IMR-90 (cell line): ENCODE measurements at regions of chr14 and their contacts with region 1.

Region 1: GRCh38 chr14:39154594-39155189 is 15.4 kb downstream of the TRAPPC6B start:
- DNase-seq: no peak
- ATAC-seq: no peak
- H3K4me3 ChIP-seq: no peak overlapping the region
- H3K27ac ChIP-seq: no peak overlapping the region
- H3K4me1 ChIP-seq: no peaks in the 10 kb centered on the region
- H3K27me3 ChIP-seq: no peaks in the 10 kb centered on the region
- CTCF ChIP-seq: no peak
- POLR2A ChIP-seq: no peak
- RAD21 ChIP-seq: no peak

Region 2: DNA sequence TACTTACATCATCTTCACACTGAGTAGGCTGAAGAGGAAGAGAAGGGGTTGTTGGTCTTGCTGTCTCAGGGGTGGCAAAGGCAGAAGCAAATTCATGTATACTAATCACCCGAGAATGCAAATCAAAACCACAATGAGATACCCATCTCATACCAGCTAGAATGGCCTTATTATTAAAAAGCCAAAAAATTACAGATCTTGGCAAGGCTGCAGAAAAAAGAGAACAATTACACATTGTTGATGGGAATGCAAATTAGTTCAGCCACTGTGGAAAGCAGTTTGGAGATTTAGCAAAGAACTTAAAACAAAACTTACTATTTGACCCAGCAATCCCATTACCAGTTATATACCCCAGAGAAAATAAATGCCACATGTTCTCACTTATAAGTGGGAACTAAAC is 206.5 kb before region 1 on chr14:
- CTCF ChIA-PET with region 1: no interaction called
- POLR2A ChIA-PET with region 1: no interaction called
- dilution Hi-C with region 1: no loop called
- in situ Hi-C with region 1: no loop called
- intact Hi-C with region 1: no loop called
- DNase-seq: no peak
- ATAC-seq: no peak
- H3K4me3 ChIP-seq: no peak overlapping the region
- H3K27ac ChIP-seq: no peak overlapping the region
- H3K4me1 ChIP-seq: no peaks in the 10 kb centered on the region
- H3K27me3 ChIP-seq: 0 out of 2 replicates have a peak, but pooled peaks cover 3% of the 10 kb centered on the region
- CTCF ChIP-seq: no peak
- POLR2A ChIP-seq: no peak
- RAD21 ChIP-seq: no peak

Region 3: DNA sequence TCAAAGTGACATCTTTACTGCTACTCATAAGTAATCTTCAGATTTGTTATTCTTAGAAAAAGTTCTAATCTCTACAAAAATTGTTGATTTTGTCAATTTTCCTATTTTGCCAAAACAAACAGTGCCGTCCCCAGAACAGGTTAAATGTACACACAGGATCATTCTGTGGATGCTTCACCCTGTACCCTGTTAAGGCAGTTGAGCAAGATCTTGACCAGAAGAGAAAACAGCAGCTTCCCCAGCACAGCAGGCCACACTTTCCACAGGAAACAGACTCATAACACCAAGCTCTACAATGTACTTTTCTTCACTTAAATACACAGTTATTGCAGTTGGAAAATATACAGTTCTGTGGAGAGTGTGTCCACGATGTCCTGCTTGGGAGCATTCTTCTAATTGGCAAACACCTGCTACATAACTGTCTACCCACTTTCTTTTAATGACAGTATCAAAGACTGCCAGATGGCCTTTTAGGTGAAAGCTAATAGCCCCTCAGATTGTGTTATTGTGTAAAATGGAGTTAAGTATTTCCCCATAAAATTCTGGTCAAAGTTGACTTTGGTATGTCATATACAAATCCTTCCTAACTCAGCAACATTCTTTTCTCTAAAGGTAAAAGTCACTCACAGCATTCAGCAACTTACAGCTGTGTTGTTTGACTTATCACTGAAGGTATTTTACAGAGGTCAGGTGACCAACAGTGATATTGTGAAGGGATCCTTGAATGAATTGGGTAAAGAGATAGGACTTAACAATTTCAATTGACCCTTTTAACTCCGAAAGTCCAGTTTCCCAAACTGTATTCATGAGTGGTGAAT is 128.7 kb before region 1 on chr14:
- CTCF ChIA-PET with region 1: no interaction called
- POLR2A ChIA-PET with region 1: interaction called, 12 read pairs
- dilution Hi-C with region 1: no loop called
- in situ Hi-C with region 1: no loop called
- intact Hi-C with region 1: no loop called
- DNase-seq: no peak
- ATAC-seq: peak; percentile 59; the same call in 1 of the 2 replicates
- H3K4me3 ChIP-seq: no peak overlapping the region
- H3K27ac ChIP-seq: no peak overlapping the region
- H3K4me1 ChIP-seq: no peaks in the 10 kb centered on the region
- H3K27me3 ChIP-seq: no peaks in the 10 kb centered on the region
- CTCF ChIP-seq: no peak
- POLR2A ChIP-seq: no peak
- RAD21 ChIP-seq: no peak

Region 4: GRCh38 chr14:39203659-39204606 is 49.2 kb after region 1 on chr14:
- CTCF ChIA-PET with region 1: no interaction called
- POLR2A ChIA-PET with region 1: no interaction called
- dilution Hi-C with region 1: no loop called
- in situ Hi-C with region 1: no loop called
- intact Hi-C with region 1: no loop called
- DNase-seq: no peak
- ATAC-seq: no peak
- H3K4me3 ChIP-seq: no peak overlapping the region
- H3K27ac ChIP-seq: no peak overlapping the region
- H3K4me1 ChIP-seq: no peaks in the 10 kb centered on the region
- H3K27me3 ChIP-seq: no peaks in the 10 kb centered on the region; the same call in 1 of the 2 replicates
- CTCF ChIP-seq: no peak
- POLR2A ChIP-seq: no peak
- RAD21 ChIP-seq: no peak